ENCODE measurements at regions of chr22 and their contacts with region 1.

Region 1: DNA sequence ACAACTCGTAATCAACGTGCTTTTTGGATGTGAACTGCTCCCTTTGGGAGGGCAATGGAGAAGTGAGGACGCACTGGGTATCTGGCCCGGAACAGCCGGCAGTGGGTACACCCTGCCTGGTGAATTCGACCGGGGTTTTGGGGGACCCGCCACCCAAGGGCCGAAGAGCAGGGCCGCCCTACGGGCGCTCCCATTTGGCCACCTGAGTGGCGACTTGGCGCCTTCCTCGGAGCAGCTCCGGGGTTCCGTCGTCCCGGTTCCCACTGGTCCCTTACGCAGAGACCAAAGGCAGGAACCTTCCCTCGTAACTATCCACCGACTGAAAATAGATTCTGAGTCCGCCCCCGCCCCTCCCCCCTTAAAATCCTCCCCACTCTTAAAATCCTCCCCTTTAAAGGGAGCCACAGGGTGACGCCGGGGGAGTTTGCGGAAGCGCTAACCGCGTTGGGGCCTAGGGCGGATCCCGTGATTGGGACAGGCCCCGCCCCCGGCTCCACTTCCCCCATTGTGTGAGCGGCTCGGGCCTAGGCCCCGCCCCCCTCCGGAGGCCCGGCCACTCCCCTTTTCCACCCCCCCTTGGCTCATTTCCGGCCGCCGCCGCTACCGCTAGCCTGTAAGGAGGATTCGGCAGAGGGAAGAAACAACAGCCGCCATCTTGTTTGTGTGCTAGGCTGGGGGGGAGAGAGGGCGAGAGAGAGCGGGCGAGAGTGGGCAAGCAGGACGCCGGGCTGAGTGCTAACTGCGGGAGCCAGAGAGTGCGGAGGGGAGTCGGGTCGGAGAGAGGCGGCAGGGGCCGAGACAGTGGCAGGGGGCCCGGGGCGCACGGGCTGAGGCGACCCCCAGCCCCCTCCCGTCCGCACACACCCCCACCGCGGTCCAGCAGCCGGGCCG is 1.0 kb upstream of the EP300 start:
- DNase-seq: peak; percentile 100
- H3K4me3 ChIP-seq: peak overlapping the region; percentile 88 to 100 (median 94)
- H3K27ac ChIP-seq: peak overlapping the region; percentile 98 to 100 (median 100)
- H3K4me1 ChIP-seq: peaks cover 0 to 41% (median 28%) of the 10 kb centered on the region in 4 donors
- H3K27me3 ChIP-seq: no peaks in the 10 kb centered on the region
- CTCF ChIP-seq: no peak
- EP300 ChIP-seq: peak in 1 of 4 donors; percentile 50
- POLR2A ChIP-seq: peak; percentile 83

Region 2: DNA sequence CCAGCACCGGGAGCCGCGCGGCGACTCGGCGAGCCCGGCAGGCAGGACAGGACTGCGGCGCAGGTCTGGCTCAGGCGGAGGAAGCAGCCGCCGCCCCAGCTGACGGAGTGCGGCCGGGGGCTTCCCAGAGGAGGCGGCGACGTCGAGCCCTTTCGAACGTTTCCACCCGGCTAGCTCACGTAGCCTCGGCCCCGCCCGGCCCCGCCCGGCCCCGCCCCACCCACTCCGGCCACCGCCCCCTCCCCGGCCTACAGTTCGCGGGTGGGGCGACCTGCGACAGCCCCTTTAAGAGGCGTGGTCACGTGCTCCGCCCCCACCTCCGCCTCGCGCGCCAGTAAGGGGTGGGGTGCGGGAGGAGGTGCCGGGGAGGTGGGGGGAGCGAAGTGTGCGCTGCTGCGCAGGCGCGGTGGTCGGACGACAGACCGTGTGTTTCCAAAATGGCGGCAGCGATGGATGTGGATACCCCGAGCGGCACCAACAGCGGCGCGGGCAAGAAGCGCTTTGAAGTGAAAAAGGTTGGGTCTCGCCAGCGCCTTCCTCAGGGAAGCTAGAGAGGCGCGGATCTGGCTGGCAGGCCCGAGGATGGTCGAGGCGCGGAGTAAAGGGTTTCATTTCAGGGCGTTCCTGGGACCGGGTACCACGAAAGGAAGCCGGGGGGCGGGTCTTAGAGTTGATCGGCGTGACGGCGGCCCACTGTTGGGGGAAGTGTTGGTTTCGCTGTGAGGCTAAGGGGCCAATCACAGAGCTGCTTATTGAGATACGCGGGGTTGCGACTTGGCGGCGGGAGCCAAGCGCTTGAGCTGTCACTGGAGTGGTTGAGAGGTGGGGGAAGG is 140.2 kb before region 1 on chr22 and contains the start of gene RBX1:
- intact Hi-C with region 1: loop called (anchors 1 kb)
- DNase-seq: peak; percentile 99
- H3K4me3 ChIP-seq: peak within 1 kb of the TSS; percentile 72 to 86 (median 80)
- H3K27ac ChIP-seq: peak within 1 kb of the TSS; percentile 96 to 98 (median 97)
- H3K4me1 ChIP-seq: peaks cover 0 to 38% (median 23%) of the 10 kb centered on the region in 4 donors
- H3K27me3 ChIP-seq: no peaks in the 10 kb centered on the region
- CTCF ChIP-seq: no peak
- EP300 ChIP-seq: peak in 1 of 4 donors; percentile 79
- POLR2A ChIP-seq: peak; percentile 25 to 39
- total RNA-seq, gene RBX1: 32.4 to 72.8 (median 51.2) TPM

Region 3: GRCh38 chr22:41022470-41023298 is 68.7 kb before region 1 on chr22:
- intact Hi-C with region 1: loop called (anchors 1 kb)
- DNase-seq: peak; percentile 98
- H3K4me3 ChIP-seq: peak overlapping the region; percentile 52 to 73 (median 64)
- H3K27ac ChIP-seq: peak overlapping the region; percentile 96 to 99 (median 98)
- H3K4me1 ChIP-seq: peaks cover 0 to 18% (median 11%) of the 10 kb centered on the region in 4 donors
- H3K27me3 ChIP-seq: no peaks in the 10 kb centered on the region
- CTCF ChIP-seq: peak in 1 of 4 experiments; percentile 5
- EP300 ChIP-seq: peak in 2 of 4 donors; percentile 43 to 71
- POLR2A ChIP-seq: peak; percentile 89 to 90

Region 4: GRCh38 chr22:41048791-41049717 is 42.3 kb before region 1 on chr22:
- intact Hi-C with region 1: loop called (anchors 2 kb)
- DNase-seq: peak; percentile 89
- H3K4me3 ChIP-seq: peak overlapping the region in 3 of 4 donors; percentile 34 to 44 (median 41)
- H3K27ac ChIP-seq: peak overlapping the region; percentile 61 to 73 (median 66)
- H3K4me1 ChIP-seq: peaks cover 0 to 15% (median 6%) of the 10 kb centered on the region in 4 donors
- H3K27me3 ChIP-seq: no peaks in the 10 kb centered on the region
- CTCF ChIP-seq: no peak
- EP300 ChIP-seq: no peak
- POLR2A ChIP-seq: no peak

Region 5: GRCh38 chr22:41204992-41205900 is 113.9 kb after region 1 on chr22 and contains the start of gene L3MBTL2:
- intact Hi-C with region 1: loop called (anchors 5 kb)
- DNase-seq: peak; percentile 99
- H3K4me3 ChIP-seq: peak within 1 kb of the TSS; percentile 64 to 89 (median 75)
- H3K27ac ChIP-seq: peak within 1 kb of the TSS; percentile 79 to 92 (median 88)
- H3K4me1 ChIP-seq: peaks cover 0 to 10% (median 8%) of the 10 kb centered on the region in 4 donors
- H3K27me3 ChIP-seq: no peaks in the 10 kb centered on the region
- CTCF ChIP-seq: no peak
- EP300 ChIP-seq: no peak
- POLR2A ChIP-seq: peak; percentile 45 to 61
- total RNA-seq, gene L3MBTL2: 9.9 to 19.0 (median 15.1) TPM